GM10248 (cell line): ENCODE measurements at regions of chr5 and their contacts with region 1.

Region 1: GRCh38 chr5:81194633-81195333 is 38.3 kb upstream of the CKMT2 start:
- DNase-seq: peak; percentile 91
- CTCF ChIP-seq: peak; percentile 93

Region 2: GRCh38 chr5:81177061-81177460 is 17.7 kb before region 1 on chr5:
- CTCF ChIA-PET with region 1: interaction called, 30 read pairs
- POLR2A ChIA-PET with region 1: interaction called, 3 read pairs
- DNase-seq: no peak
- CTCF ChIP-seq: no peak

Region 3: DNA sequence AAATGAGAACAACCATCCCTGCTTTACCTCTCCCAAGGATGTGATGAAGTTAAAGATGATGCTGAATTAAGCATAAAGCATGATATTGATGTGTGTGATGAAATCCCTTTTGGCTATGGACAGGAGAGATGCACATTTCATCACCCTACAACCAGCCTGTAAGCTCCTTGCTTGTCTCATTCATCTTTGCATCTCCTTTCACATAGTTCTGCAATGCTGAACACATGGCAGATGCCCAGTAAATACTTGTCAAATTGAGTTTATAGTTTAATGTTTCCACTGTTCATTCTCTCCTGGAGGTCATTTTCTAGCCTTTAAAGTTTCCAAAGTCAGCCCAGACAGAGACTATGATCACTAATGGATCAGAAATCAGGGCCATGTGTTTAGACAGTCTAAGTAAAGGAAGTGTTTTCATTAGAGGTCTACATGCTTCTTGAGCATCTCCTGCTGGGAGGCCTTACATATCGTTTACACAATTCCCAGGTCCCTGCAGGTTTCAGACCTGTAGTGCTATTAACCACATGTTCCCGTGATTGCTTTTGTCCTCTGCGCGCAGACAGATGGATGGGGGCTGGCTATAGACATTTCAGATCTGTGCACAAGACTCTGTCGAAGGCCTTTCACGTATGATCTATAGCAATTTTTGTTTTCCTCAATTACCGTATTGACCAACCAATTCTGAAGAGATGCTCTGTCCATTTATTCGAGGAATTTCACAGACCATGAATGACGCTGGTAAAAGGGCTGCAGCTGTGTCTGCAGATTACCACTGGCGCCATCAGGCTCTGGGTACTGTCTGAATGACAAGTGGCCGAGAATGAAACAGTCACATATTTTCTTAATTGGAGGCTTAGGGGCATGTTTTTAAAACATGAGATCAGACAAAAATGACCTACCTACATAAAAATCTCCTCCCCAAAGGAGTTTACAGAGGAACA is 10.7 kb before region 1 on chr5:
- CTCF ChIA-PET with region 1: interaction called, 30 read pairs
- POLR2A ChIA-PET with region 1: no interaction called
- DNase-seq: no peak
- CTCF ChIP-seq: no peak

Region 4: GRCh38 chr5:81207009-81207408 is 12.2 kb after region 1 on chr5:
- CTCF ChIA-PET with region 1: interaction called, 41 read pairs
- POLR2A ChIA-PET with region 1: no interaction called
- DNase-seq: no peak
- CTCF ChIP-seq: peak; percentile 21